Endothelial cell of umbilical vein (primary cell): ENCODE measurements at regions of chr13 and their contacts with region 1.

Region 1: GRCh38 chr13:36282818-36283445 is 14.7 kb downstream of the CCDC169 start:
- DNase-seq: peak; percentile 61
- H3K4me3 ChIP-seq: no peak overlapping the region
- H3K27ac ChIP-seq: no peak overlapping the region
- H3K4me1 ChIP-seq: no peaks in the 10 kb centered on the region
- H3K27me3 ChIP-seq: no peaks in the 10 kb centered on the region
- CTCF ChIP-seq: peak; percentile 52 to 53
- POLR2A ChIP-seq: no peak

Region 2: DNA sequence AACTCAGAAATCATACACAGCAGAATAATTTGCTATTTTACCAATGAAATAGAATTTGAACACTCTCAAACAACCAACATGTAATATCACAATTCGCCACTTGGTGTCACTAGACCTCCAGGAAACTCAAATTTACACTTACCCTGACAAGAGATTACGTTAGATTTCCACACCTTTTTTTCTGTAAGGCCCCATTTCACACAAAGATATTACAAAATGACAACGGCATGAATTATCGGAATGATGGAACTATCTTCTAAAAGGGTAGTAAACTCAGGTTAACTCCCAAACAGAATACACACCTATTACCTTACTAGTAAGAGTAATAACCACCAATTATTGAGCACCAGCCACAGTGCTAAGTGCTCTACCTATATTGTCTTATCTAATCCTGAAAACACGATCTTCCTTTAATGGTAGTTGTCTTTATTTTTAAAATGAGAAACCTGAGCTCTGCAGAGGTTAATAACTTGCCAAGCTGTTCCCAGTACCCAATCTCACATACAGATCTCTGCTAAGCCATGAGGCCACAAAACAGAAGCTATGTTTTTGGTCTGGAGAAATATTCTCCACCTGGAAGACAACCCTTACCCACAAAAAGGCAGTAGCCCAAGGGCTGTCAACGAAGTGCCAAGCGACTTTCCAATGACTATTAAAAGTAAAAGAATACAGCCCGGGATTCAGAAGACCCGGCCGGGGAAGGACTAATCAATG is 304.2 kb before region 1 on chr13:
- CTCF ChIA-PET with region 1: interaction called, 482 read pairs
- POLR2A ChIA-PET with region 1: no interaction called
- dilution Hi-C with region 1: no loop called
- intact Hi-C with region 1: no loop called
- DNase-seq: peak; percentile 78
- H3K4me3 ChIP-seq: no peak overlapping the region
- H3K27ac ChIP-seq: no peak overlapping the region
- H3K4me1 ChIP-seq: peaks cover 7% of the 10 kb centered on the region
- H3K27me3 ChIP-seq: no peaks in the 10 kb centered on the region
- CTCF ChIP-seq: peak; percentile 35 to 50
- POLR2A ChIP-seq: no peak

Region 3: GRCh38 chr13:36297366-36298338 is 14.7 kb after region 1 on chr13 and contains the start of gene CCDC169:
- CTCF ChIA-PET with region 1: interaction called, 29 read pairs
- POLR2A ChIA-PET with region 1: no interaction called
- dilution Hi-C with region 1: no loop called
- intact Hi-C with region 1: no loop called
- DNase-seq: peak; percentile 85
- H3K4me3 ChIP-seq: peak within 1 kb of the TSS; percentile 31 to 69 (median 59)
- H3K27ac ChIP-seq: peak within 1 kb of the TSS; percentile 17
- H3K4me1 ChIP-seq: peaks cover 18% of the 10 kb centered on the region
- H3K27me3 ChIP-seq: no peaks in the 10 kb centered on the region
- CTCF ChIP-seq: no peak
- POLR2A ChIP-seq: peak; percentile 84
- total RNA-seq, gene CCDC169: 2.5 and 5.3 TPM in 2 replicates

Region 4: GRCh38 chr13:36420437-36420891 is 137.5 kb after region 1 on chr13:
- CTCF ChIA-PET with region 1: interaction called, 25 read pairs
- POLR2A ChIA-PET with region 1: no interaction called
- dilution Hi-C with region 1: no loop called
- intact Hi-C with region 1: loop called (anchors 1 kb)
- DNase-seq: peak; percentile 84
- H3K4me3 ChIP-seq: no peak overlapping the region
- H3K27ac ChIP-seq: no peak overlapping the region
- H3K4me1 ChIP-seq: peaks cover 32% of the 10 kb centered on the region
- H3K27me3 ChIP-seq: no peaks in the 10 kb centered on the region
- CTCF ChIP-seq: peak; percentile 86 to 91
- POLR2A ChIP-seq: no peak

Region 5: DNA sequence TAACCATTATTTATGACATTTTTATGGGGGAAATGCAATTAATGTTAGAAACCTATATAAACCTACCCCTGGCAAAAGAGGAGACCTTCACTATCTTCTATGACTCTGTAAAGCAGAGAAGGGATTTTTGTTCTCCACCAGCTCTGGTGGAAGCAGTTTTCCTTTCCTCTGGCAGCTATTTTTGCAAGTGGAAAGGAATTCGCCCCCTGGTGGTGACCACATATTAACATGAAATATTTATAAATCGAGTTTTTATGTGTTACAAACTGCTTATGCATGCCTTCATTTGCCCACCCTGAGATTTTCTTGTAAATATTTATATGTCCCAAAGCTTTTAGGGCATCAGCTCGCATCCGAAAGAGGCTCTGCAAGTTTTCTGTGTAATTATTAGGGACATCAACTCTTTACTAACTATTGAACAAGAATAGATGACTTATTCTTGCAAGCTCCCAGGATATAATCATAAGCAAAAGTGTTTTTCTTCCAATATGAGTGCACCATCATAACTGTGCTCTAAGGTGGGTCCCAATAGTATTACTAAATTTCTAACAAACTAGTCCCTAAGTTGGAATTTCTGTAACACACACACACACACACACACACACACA is 453.3 kb after region 1 on chr13:
- CTCF ChIA-PET with region 1: interaction called, 87 read pairs
- POLR2A ChIA-PET with region 1: no interaction called
- dilution Hi-C with region 1: no loop called
- intact Hi-C with region 1: loop called (anchors 1 kb)
- DNase-seq: peak; percentile 65
- H3K4me3 ChIP-seq: no peak overlapping the region
- H3K27ac ChIP-seq: no peak overlapping the region
- H3K4me1 ChIP-seq: no peaks in the 10 kb centered on the region
- H3K27me3 ChIP-seq: peaks cover 5 to 8% of the 10 kb centered on the region in 2 experiments
- CTCF ChIP-seq: peak; percentile 45 to 48
- POLR2A ChIP-seq: no peak

Region 6: GRCh38 chr13:36981156-36981743 is 698.3 kb after region 1 on chr13:
- CTCF ChIA-PET with region 1: interaction called, 14 read pairs
- POLR2A ChIA-PET with region 1: no interaction called
- dilution Hi-C with region 1: no loop called
- intact Hi-C with region 1: loop called (anchors 10 kb)
- DNase-seq: peak; percentile 75
- H3K4me3 ChIP-seq: no peak overlapping the region
- H3K27ac ChIP-seq: no peak overlapping the region
- H3K4me1 ChIP-seq: no peaks in the 10 kb centered on the region
- H3K27me3 ChIP-seq: no peaks in the 10 kb centered on the region
- CTCF ChIP-seq: peak; percentile 33 to 37
- POLR2A ChIP-seq: no peak

Region 7: GRCh38 chr13:37429976-37430375 is 1147.0 kb after region 1 on chr13:
- CTCF ChIA-PET with region 1: no interaction called
- POLR2A ChIA-PET with region 1: no interaction called
- dilution Hi-C with region 1: no loop called
- intact Hi-C with region 1: no loop called
- DNase-seq: no peak
- H3K4me3 ChIP-seq: no peak overlapping the region
- H3K27ac ChIP-seq: no peak overlapping the region
- H3K4me1 ChIP-seq: no peaks in the 10 kb centered on the region
- H3K27me3 ChIP-seq: no peaks in the 10 kb centered on the region
- CTCF ChIP-seq: no peak
- POLR2A ChIP-seq: no peak